ENCODE measurements at regions of chr21 and their contacts with region 1.

Region 1: DNA sequence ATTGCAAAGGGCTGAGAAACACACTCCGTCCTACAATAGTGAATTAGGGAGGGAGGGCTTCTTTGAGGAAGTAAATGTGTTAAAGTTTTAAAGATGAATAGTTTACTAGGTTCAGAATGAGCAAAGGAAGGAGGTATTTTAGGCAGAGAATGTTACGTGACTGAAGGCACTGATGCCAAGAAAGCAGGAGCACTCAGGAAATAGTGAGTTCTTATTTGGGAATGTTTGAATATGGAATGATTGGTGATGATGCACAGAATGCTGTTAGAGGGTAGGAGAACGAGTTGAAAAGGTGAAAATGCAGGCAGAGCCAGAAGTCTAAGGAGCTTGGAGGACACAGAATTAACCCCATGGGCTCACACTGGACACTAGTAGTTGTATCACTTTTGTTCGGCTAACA is 108.0 kb downstream of the NRIP1 start:
- DNase-seq: peak; percentile 4 to 66
- H3K4me3 ChIP-seq: no peak overlapping the region
- H3K27ac ChIP-seq: peak overlapping the region; percentile 54
- H3K4me1 ChIP-seq: peaks cover 31% of the 10 kb centered on the region
- H3K27me3 ChIP-seq: no peaks in the 10 kb centered on the region
- CTCF ChIP-seq: no peak

Region 2: GRCh38 chr21:14877570-14878228 is 79.1 kb before region 1 on chr21:
- CTCF ChIA-PET with region 1: no interaction called
- POLR2A ChIA-PET with region 1: no interaction called
- intact Hi-C with region 1: loop called (anchors 2 kb)
- DNase-seq: peak in 1 of 2 experiments; percentile 93
- H3K4me3 ChIP-seq: peak overlapping the region; percentile 19; the same call in 1 of the 2 replicates
- H3K27ac ChIP-seq: peak overlapping the region; percentile 87
- H3K4me1 ChIP-seq: peaks cover 89% of the 10 kb centered on the region
- H3K27me3 ChIP-seq: no peaks in the 10 kb centered on the region
- CTCF ChIP-seq: no peak

Region 3: DNA sequence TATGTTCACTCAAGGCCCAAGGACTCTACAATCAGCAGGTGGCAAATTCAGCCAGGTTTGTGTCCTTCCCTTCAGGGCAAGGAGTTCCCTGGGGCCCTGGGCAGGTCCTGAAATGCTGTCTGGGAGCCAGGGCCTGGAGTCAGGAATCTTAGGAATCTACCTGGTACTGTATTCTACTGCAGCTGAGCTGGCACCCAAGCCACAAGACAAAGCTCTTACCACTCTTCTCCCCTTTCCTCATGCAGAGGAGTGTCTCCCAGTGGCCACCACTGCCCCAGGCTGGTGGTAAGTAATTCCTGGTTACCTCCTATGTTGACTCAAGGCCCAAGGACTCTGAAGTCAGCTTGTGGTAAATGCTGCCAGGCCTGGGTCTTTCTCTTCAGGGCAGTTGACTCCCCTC is 45.5 kb before region 1 on chr21:
- CTCF ChIA-PET with region 1: no interaction called
- POLR2A ChIA-PET with region 1: interaction called, 17 read pairs
- intact Hi-C with region 1: loop called (anchors 1 kb)
- DNase-seq: peak; percentile 81 to 90
- H3K4me3 ChIP-seq: no peak overlapping the region
- H3K27ac ChIP-seq: peak overlapping the region; percentile 72
- H3K4me1 ChIP-seq: peaks cover 50% of the 10 kb centered on the region
- H3K27me3 ChIP-seq: no peaks in the 10 kb centered on the region
- CTCF ChIP-seq: no peak

Region 4: GRCh38 chr21:14916676-14917141 is 40.1 kb before region 1 on chr21:
- CTCF ChIA-PET with region 1: no interaction called
- POLR2A ChIA-PET with region 1: interaction called, 17 read pairs
- intact Hi-C with region 1: loop called (anchors 1 kb)
- DNase-seq: peak; percentile 62 to 93
- H3K4me3 ChIP-seq: peak overlapping the region; percentile 42
- H3K27ac ChIP-seq: peak overlapping the region; percentile 93
- H3K4me1 ChIP-seq: peaks cover 72% of the 10 kb centered on the region
- H3K27me3 ChIP-seq: no peaks in the 10 kb centered on the region
- CTCF ChIP-seq: no peak

Region 5: GRCh38 chr21:15804247-15805005 is 847.6 kb after region 1 on chr21:
- CTCF ChIA-PET with region 1: no interaction called
- POLR2A ChIA-PET with region 1: interaction called, 12 read pairs
- intact Hi-C with region 1: no loop called
- DNase-seq: no peak
- H3K4me3 ChIP-seq: no peak overlapping the region
- H3K27ac ChIP-seq: no peak overlapping the region
- H3K4me1 ChIP-seq: no peaks in the 10 kb centered on the region
- H3K27me3 ChIP-seq: no peaks in the 10 kb centered on the region
- CTCF ChIP-seq: no peak